Caco-2 (cell line): ENCODE measurements at regions of chr3 and their contacts with region 1.

Region 1: DNA sequence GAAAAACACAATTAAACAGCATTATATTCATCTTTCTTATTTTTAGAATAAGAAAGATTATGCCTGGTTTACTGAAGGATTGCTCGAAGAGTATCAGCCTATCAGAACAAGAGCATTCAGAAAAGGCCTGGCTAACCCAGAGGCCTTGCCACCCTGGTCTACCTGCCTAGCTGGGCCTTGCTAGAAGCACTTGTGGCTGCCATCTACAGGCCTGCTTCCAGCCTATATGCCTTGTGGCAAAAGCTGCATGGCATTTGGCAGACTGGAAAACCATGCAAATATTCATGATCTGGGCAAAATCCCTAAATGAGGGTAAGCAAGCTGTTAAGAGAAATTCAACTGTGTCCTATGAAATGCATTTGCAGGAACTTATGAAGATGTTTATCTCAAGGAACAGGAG is 9.3 kb upstream of the ATP13A4 start:
- DNase-seq: peak; percentile 27 to 38
- H3K4me3 ChIP-seq: no peak overlapping the region
- H3K4me3 Mint-ChIP-seq: no peak overlapping the region
- H3K27ac Mint-ChIP-seq: no peak overlapping the region
- H3K4me1 ChIP-seq: no peaks in the 10 kb centered on the region
- H3K4me1 Mint-ChIP-seq: no peaks in the 10 kb centered on the region
- H3K27me3 ChIP-seq: no peaks in the 10 kb centered on the region
- H3K27me3 Mint-ChIP-seq: no peaks in the 10 kb centered on the region
- CTCF ChIP-seq: peak; percentile 18 to 37

Region 2: GRCh38 chr3:192687488-192688152 is 876.4 kb before region 1 on chr3:
- CTCF ChIA-PET with region 1: interaction called, 14 read pairs
- POLR2A ChIA-PET with region 1: no interaction called
- intact Hi-C with region 1: no loop called
- DNase-seq: no peak
- H3K4me3 ChIP-seq: no peak overlapping the region
- H3K4me3 Mint-ChIP-seq: no peak overlapping the region
- H3K27ac Mint-ChIP-seq: no peak overlapping the region
- H3K4me1 ChIP-seq: no peaks in the 10 kb centered on the region
- H3K4me1 Mint-ChIP-seq: no peaks in the 10 kb centered on the region
- H3K27me3 ChIP-seq: no peaks in the 10 kb centered on the region
- H3K27me3 Mint-ChIP-seq: peaks cover 9% of the 10 kb centered on the region
- CTCF ChIP-seq: no peak

Region 3: GRCh38 chr3:193262709-193263108 is 301.3 kb before region 1 on chr3:
- CTCF ChIA-PET with region 1: no interaction called
- POLR2A ChIA-PET with region 1: no interaction called
- intact Hi-C with region 1: loop called (anchors 1 kb)
- DNase-seq: peak in 1 of 2 experiments; percentile 6
- H3K4me3 ChIP-seq: no peak overlapping the region
- H3K4me3 Mint-ChIP-seq: no peak overlapping the region
- H3K27ac Mint-ChIP-seq: no peak overlapping the region
- H3K4me1 ChIP-seq: no peaks in the 10 kb centered on the region
- H3K4me1 Mint-ChIP-seq: no peaks in the 10 kb centered on the region
- H3K27me3 ChIP-seq: no peaks in the 10 kb centered on the region
- H3K27me3 Mint-ChIP-seq: peaks cover 13% of the 10 kb centered on the region
- CTCF ChIP-seq: peak in 1 of 2 experiments; percentile 42

Region 4: DNA sequence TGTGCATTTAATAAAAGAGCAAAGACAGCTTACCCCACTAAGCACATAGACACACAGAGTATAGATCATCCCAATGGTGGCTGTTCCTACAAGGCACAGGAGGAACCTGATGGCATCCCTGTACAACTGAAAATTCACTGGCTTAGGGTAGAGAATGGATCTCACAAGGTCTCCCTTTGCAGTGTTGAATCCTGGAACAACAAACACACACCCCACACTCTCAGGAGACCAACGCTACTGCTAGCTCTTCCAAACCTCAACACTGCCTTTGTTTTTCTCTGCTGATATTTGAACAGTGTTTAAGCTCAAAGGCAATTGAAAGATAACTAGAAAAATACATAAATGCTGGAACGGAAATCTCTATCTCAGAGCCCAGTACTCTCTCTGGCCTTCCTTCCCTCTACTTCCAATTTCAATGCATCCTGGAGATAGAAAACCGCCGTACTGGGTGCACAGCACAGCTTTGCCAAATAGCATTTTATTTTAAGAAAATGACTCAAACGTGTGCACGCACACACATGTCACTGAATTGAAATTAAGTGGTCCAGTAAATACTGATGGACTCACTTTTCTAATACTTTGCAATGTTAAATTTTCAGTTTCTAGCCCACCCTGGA is 97.9 kb before region 1 on chr3:
- CTCF ChIA-PET with region 1: no interaction called
- POLR2A ChIA-PET with region 1: no interaction called
- intact Hi-C with region 1: loop called (anchors 1 kb)
- DNase-seq: no peak
- H3K4me3 ChIP-seq: no peak overlapping the region
- H3K4me3 Mint-ChIP-seq: no peak overlapping the region
- H3K27ac Mint-ChIP-seq: no peak overlapping the region
- H3K4me1 ChIP-seq: no peaks in the 10 kb centered on the region
- H3K4me1 Mint-ChIP-seq: peaks cover 6% of the 10 kb centered on the region
- H3K27me3 ChIP-seq: no peaks in the 10 kb centered on the region
- H3K27me3 Mint-ChIP-seq: peaks cover 5% of the 10 kb centered on the region
- CTCF ChIP-seq: no peak